Vagina (tissue), 2 donors: ENCODE measurements at regions of chr10 and their contacts with region 1.

Region 1: GRCh38 chr10:51010977-51011376 is 63.3 kb upstream of the PRKG1 start:
- DNase-seq: no peak
- H3K4me3 ChIP-seq: no peak overlapping the region
- H3K27ac ChIP-seq: no peak overlapping the region
- H3K4me1 ChIP-seq: no peaks in the 10 kb centered on the region
- H3K27me3 ChIP-seq: no peaks in the 10 kb centered on the region
- CTCF ChIP-seq: peak; percentile 15 to 57 (median 38)
- POLR2A ChIP-seq: no peak

Region 2: DNA sequence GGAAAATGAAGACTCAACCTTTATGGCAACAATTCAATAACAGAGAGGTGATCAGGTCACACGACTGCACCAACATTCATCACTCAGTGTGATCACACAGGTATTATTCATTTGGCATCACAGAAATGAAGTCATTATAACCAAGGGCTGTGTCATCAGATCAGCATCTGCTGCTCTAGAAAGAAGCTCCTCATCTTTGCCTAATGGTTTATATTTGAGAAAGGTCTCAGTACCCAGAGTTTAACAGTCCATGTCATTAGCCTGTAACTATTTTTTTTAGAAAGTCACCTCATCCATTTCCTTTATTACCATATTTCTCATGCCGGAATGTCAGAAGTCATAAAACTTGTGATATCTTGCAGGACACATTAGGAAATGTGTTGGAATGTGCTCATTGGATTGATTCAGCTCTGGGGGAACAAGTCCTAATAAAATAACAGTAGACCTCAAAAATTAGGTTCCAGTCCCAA is 18.2 kb after region 1 on chr10:
- intact Hi-C with region 1: no loop called
- DNase-seq: no peak
- H3K4me3 ChIP-seq: no peak overlapping the region
- H3K27ac ChIP-seq: no peak overlapping the region
- H3K4me1 ChIP-seq: peaks cover 12% of the 10 kb centered on the region
- H3K27me3 ChIP-seq: no peaks in the 10 kb centered on the region
- CTCF ChIP-seq: no peak
- POLR2A ChIP-seq: no peak

Region 3: GRCh38 chr10:52215745-52216361 is 1204.9 kb after region 1 on chr10:
- intact Hi-C with region 1: loop called (anchors 10 kb)
- DNase-seq: no peak
- H3K4me3 ChIP-seq: no peak overlapping the region
- H3K27ac ChIP-seq: no peak overlapping the region
- H3K4me1 ChIP-seq: peaks cover 15% of the 10 kb centered on the region
- H3K27me3 ChIP-seq: no peaks in the 10 kb centered on the region
- CTCF ChIP-seq: peak; percentile 60 to 82 (median 69)
- POLR2A ChIP-seq: no peak